ENCODE measurements at regions of chr20 and their contacts with region 1.

Region 1: DNA sequence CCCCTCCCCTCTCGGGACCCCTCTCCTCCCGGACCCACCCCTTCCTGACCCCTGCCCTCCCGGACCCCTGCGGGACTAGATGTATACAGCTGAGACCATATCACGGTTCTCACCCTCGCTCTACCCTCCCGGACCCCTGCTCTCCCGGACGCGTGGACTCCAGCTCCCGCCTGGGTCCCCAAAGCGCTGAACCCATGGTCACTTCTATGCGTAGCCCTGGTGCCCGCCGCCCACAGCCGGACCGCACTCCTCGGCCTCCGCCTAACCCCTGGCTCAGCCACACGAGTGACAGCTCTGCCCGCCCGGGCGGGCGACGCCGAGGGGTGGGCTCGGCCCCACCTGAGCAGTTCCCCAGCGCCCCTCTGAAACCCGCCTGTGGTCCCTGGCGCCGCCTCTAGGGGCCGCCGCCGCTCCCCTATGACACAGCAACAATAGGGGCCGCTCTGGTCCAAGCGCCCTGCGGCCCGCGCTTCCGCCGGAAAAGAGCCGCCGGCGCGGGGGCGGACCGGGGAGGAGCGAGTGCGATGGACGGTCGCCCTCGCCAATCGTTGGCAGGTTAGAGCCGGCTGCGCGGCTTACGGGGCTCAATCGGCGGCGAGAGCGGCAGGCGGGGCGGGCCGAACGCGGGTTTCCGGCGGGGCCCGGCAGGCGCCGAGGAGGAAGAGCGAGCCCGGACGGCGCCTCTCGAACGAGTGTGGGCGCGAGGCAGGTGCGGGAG is at the start of gene ADRM1:
- DNase-seq: peak; percentile 96
- H3K4me3 Mint-ChIP-seq: peak within 1 kb of the TSS; percentile 91
- H3K27ac Mint-ChIP-seq: peak within 1 kb of the TSS; percentile 99
- H3K4me1 Mint-ChIP-seq: peaks cover 24% of the 10 kb centered on the region
- H3K27me3 Mint-ChIP-seq: no peaks in the 10 kb centered on the region
- total RNA-seq, gene ADRM1: 77.4 to 81.5 TPM

Region 2: DNA sequence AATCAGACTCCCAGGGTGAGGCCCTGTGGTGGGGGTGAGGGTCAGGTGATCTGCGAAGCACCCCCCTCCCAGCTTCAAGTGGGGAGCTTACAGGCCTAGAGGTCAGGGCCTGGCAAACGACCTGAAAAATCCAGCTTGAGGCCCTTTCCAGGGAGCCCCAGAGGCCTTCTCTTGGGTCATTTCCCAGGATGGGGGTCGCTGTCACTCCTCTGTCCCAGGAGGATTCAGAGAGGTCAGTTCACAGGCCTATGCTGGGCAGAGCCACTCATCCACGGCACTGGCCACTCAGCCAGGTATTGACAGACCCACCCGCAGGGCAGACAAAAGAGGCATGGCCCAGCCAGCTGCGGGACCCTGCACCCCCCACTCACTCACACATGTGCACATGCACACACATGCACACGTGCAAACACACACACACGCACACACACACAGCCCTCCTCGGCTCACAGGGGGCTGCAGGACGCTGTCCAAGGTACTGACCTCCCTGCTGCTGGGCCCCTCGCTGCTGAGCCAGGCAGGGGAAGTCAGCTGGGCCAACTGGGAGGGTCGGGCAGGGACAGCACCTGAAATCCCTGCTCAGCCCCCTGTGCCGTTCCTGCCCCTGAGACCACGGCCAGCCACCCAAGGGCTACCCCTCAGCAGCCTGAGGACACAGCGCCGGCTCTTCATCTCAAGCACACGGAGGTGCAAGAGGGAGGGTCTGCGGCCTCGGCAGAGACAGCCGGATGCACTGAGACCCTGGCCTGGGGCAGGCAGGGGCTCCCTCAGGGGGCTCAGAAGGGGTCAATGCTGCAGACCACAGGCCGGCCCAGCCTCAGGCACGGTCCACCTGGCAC is 350.6 kb before region 1 on chr20:
- CTCF ChIA-PET with region 1: no interaction called
- intact Hi-C with region 1: no loop called
- DNase-seq: no peak
- H3K4me3 Mint-ChIP-seq: no peak overlapping the region
- H3K27ac Mint-ChIP-seq: no peak overlapping the region
- H3K4me1 Mint-ChIP-seq: no peaks in the 10 kb centered on the region
- H3K27me3 Mint-ChIP-seq: peaks cover 20% of the 10 kb centered on the region

Region 3: DNA sequence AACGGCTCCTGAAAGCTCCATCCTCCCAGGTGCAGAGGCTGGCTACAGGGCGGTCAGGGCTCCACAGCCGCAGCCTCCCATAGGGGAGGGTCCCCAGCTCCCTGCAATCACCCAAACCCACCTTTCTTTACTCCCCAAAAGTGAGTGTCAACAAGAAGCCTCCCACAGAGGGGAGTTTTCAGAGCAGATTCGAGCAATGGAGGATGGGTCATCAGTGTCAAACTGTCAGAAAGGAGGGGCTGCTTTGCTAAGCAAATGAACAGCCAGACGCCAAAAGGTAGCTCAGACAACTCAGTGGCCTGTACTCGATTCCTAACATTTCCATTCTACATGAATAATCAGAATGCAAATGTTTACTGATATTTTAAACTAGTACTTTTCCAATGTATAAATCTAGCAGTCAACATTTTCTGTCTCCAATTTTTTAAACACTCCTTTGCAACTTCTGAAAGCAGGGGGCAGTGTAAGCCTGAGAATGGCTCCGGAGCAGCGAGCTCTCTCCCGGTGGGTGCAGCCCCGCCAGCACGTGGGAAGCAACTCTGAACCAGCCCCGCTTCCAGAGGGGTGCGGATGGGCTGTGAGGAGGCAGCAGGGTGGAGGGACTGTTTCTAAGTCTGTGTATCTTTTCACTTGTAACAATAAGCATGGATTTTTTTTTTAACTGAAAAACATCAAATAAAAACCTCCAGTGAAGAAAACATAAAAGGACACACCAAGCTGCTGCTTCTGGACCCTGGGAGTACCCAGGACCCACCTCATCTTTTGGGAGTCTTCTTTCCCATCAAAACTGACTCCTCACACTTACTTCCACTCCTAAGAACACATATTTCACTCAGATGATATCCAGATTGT is 291.7 kb before region 1 on chr20:
- CTCF ChIA-PET with region 1: no interaction called
- intact Hi-C with region 1: loop called (anchors 2 kb)
- DNase-seq: peak; percentile 75
- H3K4me3 Mint-ChIP-seq: no peak overlapping the region
- H3K27ac Mint-ChIP-seq: peak overlapping the region; percentile 25
- H3K4me1 Mint-ChIP-seq: peaks cover 8% of the 10 kb centered on the region
- H3K27me3 Mint-ChIP-seq: no peaks in the 10 kb centered on the region

Region 4: GRCh38 chr20:62121776-62122631 is 180.5 kb before region 1 on chr20 and contains the start of gene LSM14B:
- CTCF ChIA-PET with region 1: no interaction called
- intact Hi-C with region 1: loop called (anchors 1 kb)
- DNase-seq: peak; percentile 95
- H3K4me3 Mint-ChIP-seq: peak within 1 kb of the TSS; percentile 87
- H3K27ac Mint-ChIP-seq: peak within 1 kb of the TSS; percentile 92
- H3K4me1 Mint-ChIP-seq: peaks cover 54% of the 10 kb centered on the region
- H3K27me3 Mint-ChIP-seq: no peaks in the 10 kb centered on the region
- total RNA-seq, gene LSM14B: 29.6 to 33.3 TPM

Region 5: GRCh38 chr20:62182613-62183425 is 119.7 kb before region 1 on chr20 and contains the start of gene MTG2:
- CTCF ChIA-PET with region 1: no interaction called
- intact Hi-C with region 1: loop called (anchors 1 kb)
- DNase-seq: peak; percentile 96
- H3K4me3 Mint-ChIP-seq: peak within 1 kb of the TSS; percentile 87
- H3K27ac Mint-ChIP-seq: peak within 1 kb of the TSS; percentile 84
- H3K4me1 Mint-ChIP-seq: peaks cover 38% of the 10 kb centered on the region
- H3K27me3 Mint-ChIP-seq: no peaks in the 10 kb centered on the region
- total RNA-seq, gene MTG2: 34.3 to 36.4 TPM

Region 6: DNA sequence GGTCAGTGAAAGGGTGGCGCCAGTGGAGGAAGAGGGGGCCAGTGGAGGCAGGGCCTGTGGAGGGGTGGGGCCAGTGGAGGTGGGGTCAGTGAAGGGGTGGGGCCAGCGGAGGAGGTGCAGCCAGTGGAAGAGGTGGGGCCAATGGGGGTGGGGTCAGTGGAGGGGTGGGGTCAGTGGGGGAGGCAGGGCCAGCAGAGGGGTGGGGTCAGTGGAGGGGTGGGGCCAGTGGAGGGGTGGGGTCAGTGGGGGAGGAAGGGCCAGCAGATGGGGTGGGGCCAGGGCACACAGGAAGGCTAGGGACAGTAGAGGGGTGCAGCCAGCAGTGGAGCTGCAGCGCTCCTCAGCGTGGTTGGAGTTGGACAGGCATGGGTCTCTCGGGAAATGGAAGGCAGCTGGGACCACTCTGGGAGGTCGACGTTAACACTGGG is 19.0 kb after region 1 on chr20:
- CTCF ChIA-PET with region 1: no interaction called
- intact Hi-C with region 1: no loop called
- DNase-seq: peak; percentile 31
- H3K4me3 Mint-ChIP-seq: no peak overlapping the region
- H3K27ac Mint-ChIP-seq: no peak overlapping the region
- H3K4me1 Mint-ChIP-seq: no peaks in the 10 kb centered on the region
- H3K27me3 Mint-ChIP-seq: no peaks in the 10 kb centered on the region

Region 7: DNA sequence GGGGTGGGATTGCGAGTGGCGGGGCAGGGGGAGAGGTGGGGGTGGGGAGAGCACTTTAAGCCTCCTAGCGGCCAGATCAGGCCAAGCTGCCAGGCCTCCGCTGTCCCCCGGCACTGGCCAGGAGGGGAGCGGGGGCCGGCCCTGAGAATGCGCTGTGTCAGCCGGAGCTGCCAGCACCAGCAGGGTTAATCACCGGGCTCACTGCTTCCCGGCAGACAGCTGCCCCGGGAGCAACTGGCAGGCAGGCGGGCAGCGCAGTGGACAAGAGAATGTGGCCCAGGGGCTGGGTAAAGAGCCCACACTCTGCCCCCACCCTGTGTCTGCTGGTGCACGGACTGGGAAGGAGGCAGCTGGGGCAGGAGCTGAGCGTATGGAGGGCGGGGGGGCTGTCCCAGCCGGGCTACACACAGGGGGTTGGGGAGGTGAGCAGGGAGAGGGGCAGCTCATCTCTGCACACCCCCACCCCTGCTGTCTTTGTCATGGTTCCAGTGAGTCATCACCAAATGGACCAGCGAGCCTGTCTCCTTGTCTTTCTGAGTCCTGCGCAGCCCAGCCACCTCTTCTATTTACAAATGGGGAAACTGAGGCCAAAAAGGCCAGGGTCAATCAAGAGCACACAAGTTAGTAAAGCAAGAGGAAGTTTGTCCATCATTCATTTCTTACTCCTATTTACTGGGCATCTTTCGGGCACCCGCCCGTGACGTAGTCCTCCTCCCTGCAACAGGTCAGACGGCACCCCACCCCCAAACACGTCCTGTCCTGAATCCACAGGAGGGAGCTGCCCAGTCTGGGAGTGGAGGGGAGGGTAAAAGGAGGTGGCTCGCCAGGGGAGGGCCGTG is 66.7 kb after region 1 on chr20:
- CTCF ChIA-PET with region 1: interaction called, 4 read pairs
- intact Hi-C with region 1: loop called (anchors 5 kb)
- DNase-seq: no peak
- H3K4me3 Mint-ChIP-seq: no peak overlapping the region
- H3K27ac Mint-ChIP-seq: no peak overlapping the region
- H3K4me1 Mint-ChIP-seq: peaks cover 6% of the 10 kb centered on the region
- H3K27me3 Mint-ChIP-seq: peaks cover 18% of the 10 kb centered on the region

Region 8: GRCh38 chr20:62407221-62407992 is 104.9 kb after region 1 on chr20 and contains the start of gene CABLES2:
- CTCF ChIA-PET with region 1: interaction called, 4 read pairs
- intact Hi-C with region 1: loop called (anchors 1 kb)
- DNase-seq: peak; percentile 94
- H3K4me3 Mint-ChIP-seq: peak within 1 kb of the TSS; percentile 78
- H3K27ac Mint-ChIP-seq: peak within 1 kb of the TSS; percentile 80
- H3K4me1 Mint-ChIP-seq: peaks cover 31% of the 10 kb centered on the region
- H3K27me3 Mint-ChIP-seq: no peaks in the 10 kb centered on the region
- total RNA-seq, gene CABLES2: 3.6 to 5.1 TPM

Region 9: GRCh38 chr20:62423326-62423986 is 121.0 kb after region 1 on chr20:
- CTCF ChIA-PET with region 1: no interaction called
- intact Hi-C with region 1: no loop called
- DNase-seq: no peak
- H3K4me3 Mint-ChIP-seq: no peak overlapping the region
- H3K27ac Mint-ChIP-seq: no peak overlapping the region
- H3K4me1 Mint-ChIP-seq: no peaks in the 10 kb centered on the region
- H3K27me3 Mint-ChIP-seq: no peaks in the 10 kb centered on the region

Region 10: GRCh38 chr20:62616728-62617621 is 314.5 kb after region 1 on chr20:
- CTCF ChIA-PET with region 1: no interaction called
- intact Hi-C with region 1: loop called (anchors 2 kb)
- DNase-seq: peak; percentile 85
- H3K4me3 Mint-ChIP-seq: peak overlapping the region; percentile 52
- H3K27ac Mint-ChIP-seq: peak overlapping the region; percentile 84
- H3K4me1 Mint-ChIP-seq: peaks cover 27% of the 10 kb centered on the region
- H3K27me3 Mint-ChIP-seq: no peaks in the 10 kb centered on the region

Measured in activated naive CD4-positive, alpha-beta T cell treated with anti-CD3 and anti-CD28 coated beads for 36 hours (primary cell).